ENCODE measurements at regions of chr5 and their contacts with region 1.

Region 1: GRCh38 chr5:149852641-149853330 is 91.8 kb downstream of the PDE6A start:
- DNase-seq: peak; percentile 75
- H3K4me3 ChIP-seq: no peak overlapping the region
- H3K27ac ChIP-seq: no peak overlapping the region
- H3K4me1 ChIP-seq: peaks cover 7% of the 10 kb centered on the region
- H3K27me3 ChIP-seq: no peaks in the 10 kb centered on the region
- CTCF ChIP-seq: peak; percentile 89 to 98
- POLR2A ChIP-seq: no peak

Region 2: GRCh38 chr5:149636851-149637246 is 215.9 kb before region 1 on chr5:
- CTCF ChIA-PET with region 1: interaction called, 28 read pairs
- POLR2A ChIA-PET with region 1: no interaction called
- dilution Hi-C with region 1: no loop called
- intact Hi-C with region 1: loop called (anchors 1 kb)
- DNase-seq: peak; percentile 57
- H3K4me3 ChIP-seq: no peak overlapping the region
- H3K27ac ChIP-seq: no peak overlapping the region
- H3K4me1 ChIP-seq: peaks cover 12% of the 10 kb centered on the region
- H3K27me3 ChIP-seq: no peaks in the 10 kb centered on the region
- CTCF ChIP-seq: peak; percentile 72 to 74
- POLR2A ChIP-seq: no peak

Region 3: DNA sequence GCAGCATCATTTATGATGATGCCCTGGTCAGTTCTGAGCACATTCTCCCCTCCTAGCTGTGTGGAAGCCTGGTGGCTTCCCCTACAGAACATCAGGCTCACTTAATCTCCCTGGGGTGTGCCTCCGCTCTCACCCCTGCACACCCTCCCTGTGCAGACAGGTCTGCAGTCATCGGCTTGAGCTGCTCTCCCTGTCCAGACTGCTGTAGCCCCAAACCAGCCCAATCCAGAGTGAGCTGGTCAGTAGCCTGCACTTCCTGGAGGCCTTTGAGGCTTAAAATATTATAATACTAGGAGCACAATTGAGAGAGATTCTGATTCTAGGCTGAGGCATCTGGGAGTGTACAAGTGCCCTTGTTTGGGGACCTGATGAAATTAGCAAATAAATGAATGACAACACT is 62.5 kb before region 1 on chr5:
- CTCF ChIA-PET with region 1: no interaction called
- POLR2A ChIA-PET with region 1: no interaction called
- dilution Hi-C with region 1: no loop called
- intact Hi-C with region 1: no loop called
- DNase-seq: no peak
- H3K4me3 ChIP-seq: no peak overlapping the region
- H3K27ac ChIP-seq: no peak overlapping the region
- H3K4me1 ChIP-seq: no peaks in the 10 kb centered on the region
- H3K27me3 ChIP-seq: no peaks in the 10 kb centered on the region
- CTCF ChIP-seq: no peak
- POLR2A ChIP-seq: no peak

Region 4: GRCh38 chr5:149872351-149873040 is 19.7 kb after region 1 on chr5:
- CTCF ChIA-PET with region 1: interaction called, 43 read pairs
- POLR2A ChIA-PET with region 1: no interaction called
- dilution Hi-C with region 1: no loop called
- intact Hi-C with region 1: no loop called
- DNase-seq: no peak
- H3K4me3 ChIP-seq: no peak overlapping the region
- H3K27ac ChIP-seq: no peak overlapping the region
- H3K4me1 ChIP-seq: no peaks in the 10 kb centered on the region
- H3K27me3 ChIP-seq: no peaks in the 10 kb centered on the region
- CTCF ChIP-seq: no peak
- POLR2A ChIP-seq: no peak

Region 5: DNA sequence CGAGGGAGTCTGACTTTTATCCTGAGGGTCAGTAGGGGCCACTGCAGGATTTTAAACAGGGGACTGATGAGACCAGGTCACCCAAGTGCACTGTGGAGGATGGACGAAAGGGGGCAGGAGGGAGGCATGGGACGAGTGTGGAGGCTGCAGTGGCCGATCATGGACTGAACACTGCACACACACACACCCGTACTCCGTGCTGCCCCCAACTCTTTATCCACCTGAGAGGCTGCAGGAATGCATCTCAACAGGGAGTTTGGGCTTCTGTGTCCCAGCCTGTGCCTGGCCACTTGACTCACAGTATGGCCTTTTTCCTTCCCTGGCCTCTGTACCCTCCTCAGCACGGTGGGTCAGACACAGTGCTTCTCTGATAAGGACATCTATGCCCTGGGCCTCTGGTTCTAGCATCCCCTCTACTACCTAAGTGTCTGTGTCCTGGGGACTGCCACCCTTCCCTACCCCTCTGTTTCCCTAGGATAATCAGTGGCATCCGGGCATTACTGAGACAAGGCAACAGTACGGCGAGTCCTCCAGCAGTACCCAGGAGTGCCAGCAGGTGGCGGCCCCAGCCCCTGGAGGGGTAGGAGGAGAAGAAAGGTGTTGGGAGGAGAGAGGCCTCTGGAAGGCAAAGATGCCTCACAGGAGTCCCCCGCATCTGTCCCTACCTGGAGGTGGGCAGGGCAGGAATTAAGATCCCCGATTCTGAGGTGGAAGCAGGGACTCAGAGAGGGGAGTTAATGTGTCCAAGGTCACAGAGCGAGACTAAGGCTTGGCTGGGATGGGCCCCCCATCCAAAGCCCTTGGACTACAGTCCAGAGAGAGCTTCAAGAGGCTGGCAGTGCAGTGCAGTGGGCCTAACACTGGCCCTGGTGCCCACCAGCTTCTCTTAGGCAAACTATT is 308.7 kb after region 1 on chr5:
- CTCF ChIA-PET with region 1: no interaction called
- POLR2A ChIA-PET with region 1: no interaction called
- dilution Hi-C with region 1: no loop called
- intact Hi-C with region 1: no loop called
- DNase-seq: peak; percentile 59
- H3K4me3 ChIP-seq: no peak overlapping the region
- H3K27ac ChIP-seq: no peak overlapping the region
- H3K4me1 ChIP-seq: no peaks in the 10 kb centered on the region
- H3K27me3 ChIP-seq: peaks cover 6 to 7% of the 10 kb centered on the region in 2 experiments
- CTCF ChIP-seq: peak; percentile 94 to 97
- POLR2A ChIP-seq: no peak